Thyroid gland (tissue), 4 donors: ENCODE measurements at regions of chr10 and their contacts with region 1.

Region 1: DNA sequence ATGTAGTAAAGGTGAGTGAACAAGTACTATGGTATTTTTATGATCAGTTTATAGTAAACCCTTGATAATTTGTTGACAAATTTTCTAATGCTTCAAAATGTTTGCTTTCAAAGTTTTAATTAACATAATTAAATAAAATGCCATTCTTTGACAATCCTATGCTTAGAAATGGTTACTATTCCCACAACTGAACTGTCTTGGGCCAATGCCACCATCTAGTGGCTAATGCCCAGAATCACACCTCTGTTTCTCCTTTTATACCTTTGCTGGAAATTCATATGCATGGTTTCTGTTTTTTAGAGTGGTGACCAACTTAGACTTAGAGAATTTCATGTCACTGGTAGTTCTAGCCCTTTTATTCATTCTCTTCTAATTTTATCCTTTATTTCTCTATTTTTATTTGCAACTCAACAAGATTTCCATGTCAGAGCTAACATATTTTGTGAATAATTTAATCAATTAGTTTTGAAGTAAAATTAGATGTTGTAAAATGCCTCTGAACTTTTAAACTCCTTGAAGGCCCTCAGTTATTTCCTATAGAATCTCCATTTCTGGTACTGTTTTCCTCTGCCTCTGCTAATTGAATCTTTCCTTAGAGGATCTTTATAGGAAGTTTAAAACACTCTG is 31.1 kb downstream of the PCGF5 start:
- DNase-seq: peak; percentile 53 to 60
- H3K4me3 ChIP-seq: no peak overlapping the region
- H3K27ac ChIP-seq: no peak overlapping the region
- H3K4me1 ChIP-seq: peaks cover 5 to 7% of the 10 kb centered on the region in 2 donors
- H3K27me3 ChIP-seq: no peaks in the 10 kb centered on the region
- CTCF ChIP-seq: peak; percentile 73 to 96 (median 90)
- POLR2A ChIP-seq: no peak

Region 2: DNA sequence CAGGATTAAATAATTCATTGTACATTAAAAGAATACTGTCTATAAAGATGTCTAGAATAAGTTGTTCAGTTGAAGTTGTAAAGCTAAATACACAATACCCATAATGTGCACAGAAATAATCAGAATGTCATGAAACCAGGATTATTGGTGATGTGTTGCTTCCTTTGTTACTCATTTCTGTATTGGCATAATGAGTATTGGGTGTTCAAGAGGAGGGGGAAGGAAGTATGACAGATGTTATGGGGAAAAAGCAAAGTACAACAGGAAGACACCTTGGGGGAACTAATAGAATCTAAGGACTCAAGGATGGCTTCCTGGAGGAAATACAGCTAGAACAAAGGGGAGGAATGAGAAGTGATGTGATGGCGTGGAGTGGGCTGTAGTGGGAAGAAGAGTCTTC is 345.6 kb before region 1 on chr10:
- intact Hi-C with region 1: loop called (anchors 5 kb)
- DNase-seq: no peak
- H3K4me3 ChIP-seq: no peak overlapping the region
- H3K27ac ChIP-seq: no peak overlapping the region
- H3K4me1 ChIP-seq: no peaks in the 10 kb centered on the region
- H3K27me3 ChIP-seq: no peaks in the 10 kb centered on the region
- CTCF ChIP-seq: no peak
- POLR2A ChIP-seq: no peak

Region 3: DNA sequence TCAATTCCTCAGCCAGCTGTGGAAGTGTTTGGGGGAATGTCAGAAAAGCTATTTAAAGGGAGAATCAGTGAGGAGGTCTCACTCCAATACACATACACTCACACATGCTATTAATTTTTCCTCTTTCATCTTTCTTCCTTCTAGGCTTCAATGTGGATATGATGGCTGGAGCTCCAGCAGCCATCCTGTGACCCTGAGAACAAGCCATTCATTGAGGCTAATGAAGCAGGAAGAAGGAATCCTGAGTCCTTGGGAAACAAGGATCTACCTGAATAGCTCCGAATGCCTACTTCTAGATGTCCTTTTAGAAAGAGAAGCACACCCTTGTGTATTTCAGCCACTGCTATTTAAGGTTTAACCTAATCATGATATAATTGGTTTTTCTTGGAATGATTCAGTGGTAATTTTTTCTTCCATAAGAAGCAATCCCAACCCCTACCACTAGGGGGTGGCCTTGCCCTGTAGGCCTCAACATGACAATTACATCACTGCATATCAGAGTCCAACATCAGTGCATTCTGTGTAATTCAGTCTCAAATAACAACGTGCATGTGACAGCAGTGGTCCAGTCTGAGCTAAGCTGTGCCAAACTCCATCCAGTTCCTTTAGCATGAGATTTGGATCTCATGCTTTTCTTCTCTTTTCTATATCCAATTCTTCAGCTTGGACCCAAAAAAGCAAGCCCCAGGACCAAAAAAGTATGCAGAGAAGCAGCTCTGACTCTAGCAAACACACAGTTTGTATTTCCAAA is 245.4 kb before region 1 on chr10:
- intact Hi-C with region 1: loop called (anchors 5 kb)
- DNase-seq: peak; percentile 39 to 58
- H3K4me3 ChIP-seq: no peak overlapping the region
- H3K27ac ChIP-seq: no peak overlapping the region
- H3K4me1 ChIP-seq: no peaks in the 10 kb centered on the region
- H3K27me3 ChIP-seq: no peaks in the 10 kb centered on the region
- CTCF ChIP-seq: peak; percentile 76 to 90 (median 84)
- POLR2A ChIP-seq: no peak

Region 4: DNA sequence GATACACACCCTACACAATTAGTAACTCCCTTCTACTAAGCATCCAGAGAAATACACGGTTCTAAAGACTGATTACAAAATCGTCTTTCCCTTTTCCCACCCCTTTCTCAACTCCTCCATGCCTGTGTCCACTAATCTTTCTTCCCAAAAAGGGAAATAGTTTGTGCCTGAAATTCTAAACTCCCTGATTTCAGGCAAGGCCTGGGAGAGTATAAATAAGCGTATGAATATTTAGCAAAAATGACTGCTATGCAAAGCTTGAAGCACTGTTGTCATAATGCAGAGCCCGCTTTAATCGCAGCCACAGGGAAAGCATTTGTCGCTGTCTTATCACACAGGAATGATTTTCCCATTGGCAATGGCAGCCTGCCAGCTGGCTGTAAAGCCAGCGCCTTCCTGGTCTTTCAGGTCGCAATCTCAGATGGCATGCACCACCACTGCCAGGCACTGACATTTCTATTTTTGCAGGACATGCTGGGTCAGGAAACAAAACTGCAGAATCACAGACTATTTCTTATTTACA is 173.9 kb before region 1 on chr10:
- intact Hi-C with region 1: no loop called
- DNase-seq: peak; percentile 69 to 84
- H3K4me3 ChIP-seq: no peak overlapping the region
- H3K27ac ChIP-seq: no peak overlapping the region
- H3K4me1 ChIP-seq: peaks cover 6 to 11% of the 10 kb centered on the region in 2 donors
- H3K27me3 ChIP-seq: no peaks in the 10 kb centered on the region
- CTCF ChIP-seq: no peak
- POLR2A ChIP-seq: no peak